ENCODE measurements at regions of chr14 and their contacts with region 1.

Region 1: GRCh38 chr14:49767562-49768300 is at the start of gene KLHDC2:
- H3K4me3 Mint-ChIP-seq: peak within 1 kb of the TSS; percentile 89
- H3K27ac Mint-ChIP-seq: peak within 1 kb of the TSS; percentile 95
- H3K4me1 Mint-ChIP-seq: peaks cover 33% of the 10 kb centered on the region
- H3K27me3 Mint-ChIP-seq: no peaks in the 10 kb centered on the region

Region 2: DNA sequence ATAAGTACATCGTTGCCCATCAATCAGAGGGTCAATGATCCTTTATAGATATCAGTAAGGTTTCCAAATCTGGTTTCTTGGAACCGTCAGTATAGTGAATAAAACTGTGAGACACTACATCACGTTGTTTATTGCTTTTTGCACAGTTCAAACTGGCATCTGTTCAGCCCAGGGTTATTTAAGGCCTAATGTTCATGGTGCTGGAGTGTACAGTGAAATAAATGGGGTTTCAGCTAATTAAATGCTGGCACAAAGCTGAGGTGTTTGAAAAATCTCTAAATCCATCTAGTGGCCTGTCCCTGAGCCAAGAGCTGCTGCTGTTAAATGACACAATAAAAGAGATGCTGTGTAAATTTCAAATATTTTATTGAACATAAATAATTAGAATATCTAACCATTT is 251.4 kb before region 1 on chr14:
- intact Hi-C with region 1: no loop called
- H3K4me3 Mint-ChIP-seq: no peak overlapping the region
- H3K27ac Mint-ChIP-seq: no peak overlapping the region
- H3K4me1 Mint-ChIP-seq: no peaks in the 10 kb centered on the region
- H3K27me3 Mint-ChIP-seq: no peaks in the 10 kb centered on the region

Region 3: DNA sequence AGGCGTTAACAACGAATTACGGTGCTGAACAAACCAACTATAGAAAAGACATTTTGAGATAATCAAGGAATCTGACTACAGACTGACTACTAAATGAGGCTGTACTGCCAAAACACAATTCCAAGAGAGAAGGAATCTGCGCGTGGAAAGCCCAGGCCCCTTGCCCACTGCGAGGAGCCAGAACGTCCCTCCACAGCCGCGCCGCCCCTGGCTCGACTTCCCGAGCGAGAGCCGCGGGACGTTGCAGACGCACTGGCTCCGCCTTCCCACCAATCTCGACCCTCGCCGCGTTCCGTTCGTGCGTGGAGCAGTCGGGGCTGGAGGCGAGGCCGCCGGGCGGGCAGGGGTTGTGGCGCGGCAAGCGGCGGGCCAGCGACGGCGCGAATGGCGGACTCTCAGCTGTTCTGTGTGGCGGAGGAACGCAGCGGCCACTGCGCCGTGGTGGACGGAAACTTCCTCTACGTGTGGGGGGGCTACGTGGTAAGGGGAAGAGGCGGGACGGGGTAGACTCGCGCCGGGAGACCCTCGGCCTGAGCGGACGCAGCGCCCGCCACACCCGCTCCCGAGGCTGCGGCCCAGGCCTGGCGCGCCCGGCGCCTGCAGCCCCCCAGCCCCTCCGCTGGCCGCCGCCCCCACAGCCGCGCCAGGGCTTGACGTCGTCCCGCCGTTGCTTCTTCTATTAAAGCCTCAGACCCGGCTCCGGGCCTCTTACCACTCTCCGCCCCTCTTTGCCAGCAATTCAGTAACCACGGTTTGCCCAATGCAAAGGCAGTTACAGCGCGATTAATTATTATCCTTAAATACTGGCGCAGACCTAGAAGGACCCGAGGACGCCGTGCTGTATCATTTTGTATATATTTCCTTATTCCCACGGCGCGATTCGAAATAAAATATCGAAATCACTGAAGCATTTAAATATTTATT is 74.7 kb before region 1 on chr14 and contains the start of gene KLHDC1:
- intact Hi-C with region 1: loop called (anchors 1 kb)
- H3K4me3 Mint-ChIP-seq: peak within 1 kb of the TSS; percentile 75
- H3K27ac Mint-ChIP-seq: peak within 1 kb of the TSS; percentile 83
- H3K4me1 Mint-ChIP-seq: peaks cover 31% of the 10 kb centered on the region
- H3K27me3 Mint-ChIP-seq: no peaks in the 10 kb centered on the region